CD8-positive, alpha-beta T cell (primary cell): ENCODE measurements at regions of chr9 and their contacts with region 1.

Region 1: GRCh38 chr9:33721674-33722358 is 73.5 kb upstream of the PRSS3 start:
- DNase-seq: peak; percentile 75 to 94 (median 87)
- ATAC-seq: peak; percentile 87
- H3K4me3 ChIP-seq: no peak overlapping the region
- H3K4me3 Mint-ChIP-seq: no peak overlapping the region
- H3K27ac ChIP-seq: no peak overlapping the region
- H3K27ac Mint-ChIP-seq: no peak overlapping the region
- H3K4me1 ChIP-seq: no peaks in the 10 kb centered on the region
- H3K4me1 Mint-ChIP-seq: no peaks in the 10 kb centered on the region
- H3K27me3 ChIP-seq: no peaks in the 10 kb centered on the region
- H3K27me3 Mint-ChIP-seq: peaks cover 15% of the 10 kb centered on the region
- CTCF ChIP-seq: peak; percentile 100

Region 2: GRCh38 chr9:33524306-33524947 is 197.4 kb before region 1 on chr9:
- CTCF ChIA-PET with region 1: no interaction called
- POLR2A ChIA-PET with region 1: no interaction called
- intact Hi-C with region 1: no loop called
- DNase-seq: peak in 3 of 9 experiments; percentile 5 to 15 (median 8)
- ATAC-seq: no peak
- H3K4me3 ChIP-seq: peak overlapping the region; percentile 31 to 48
- H3K4me3 Mint-ChIP-seq: peak overlapping the region; percentile 80
- H3K27ac ChIP-seq: no peak overlapping the region
- H3K27ac Mint-ChIP-seq: no peak overlapping the region
- H3K4me1 ChIP-seq: peaks cover 5% of the 10 kb centered on the region
- H3K4me1 Mint-ChIP-seq: peaks cover 10% of the 10 kb centered on the region
- H3K27me3 ChIP-seq: peaks cover 8 to 11% of the 10 kb centered on the region in 2 experiments
- H3K27me3 Mint-ChIP-seq: peaks cover 53% of the 10 kb centered on the region
- CTCF ChIP-seq: no peak

Region 3: GRCh38 chr9:33633636-33634035 is 88.2 kb before region 1 on chr9:
- CTCF ChIA-PET with region 1: interaction called, 209 read pairs
- POLR2A ChIA-PET with region 1: no interaction called
- intact Hi-C with region 1: no loop called
- DNase-seq: no peak
- ATAC-seq: no peak
- H3K4me3 ChIP-seq: no peak overlapping the region
- H3K4me3 Mint-ChIP-seq: no peak overlapping the region
- H3K27ac ChIP-seq: no peak overlapping the region
- H3K27ac Mint-ChIP-seq: no peak overlapping the region
- H3K4me1 ChIP-seq: no peaks in the 10 kb centered on the region
- H3K4me1 Mint-ChIP-seq: peaks cover 3% of the 10 kb centered on the region
- H3K27me3 ChIP-seq: peaks cover 0 to 15% of the 10 kb centered on the region in 2 experiments
- H3K27me3 Mint-ChIP-seq: peaks cover 57% of the 10 kb centered on the region
- CTCF ChIP-seq: no peak

Region 4: DNA sequence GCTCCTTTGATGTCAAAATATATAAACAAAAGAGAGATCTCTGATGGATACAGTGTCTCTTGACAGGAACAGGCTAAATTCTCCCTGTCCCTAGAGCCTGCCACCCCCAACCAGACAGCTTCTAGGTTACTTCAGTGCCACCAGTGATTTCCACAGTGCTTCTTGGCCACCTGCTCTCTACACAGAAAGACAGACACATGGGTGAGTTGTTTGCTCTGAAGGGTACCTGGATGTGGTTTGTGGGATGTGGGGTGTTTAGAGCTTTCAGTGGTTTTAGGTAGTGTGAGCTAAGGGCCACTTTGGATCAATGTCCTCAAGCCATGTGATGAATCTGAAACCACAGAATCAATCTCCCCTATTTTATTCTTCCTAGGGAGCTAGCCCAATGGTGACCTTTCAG is 72.4 kb before region 1 on chr9:
- CTCF ChIA-PET with region 1: interaction called, 11 read pairs
- POLR2A ChIA-PET with region 1: no interaction called
- intact Hi-C with region 1: no loop called
- DNase-seq: peak in 2 of 9 experiments; percentile 13 to 39
- ATAC-seq: peak; percentile 44
- H3K4me3 ChIP-seq: no peak overlapping the region
- H3K4me3 Mint-ChIP-seq: no peak overlapping the region
- H3K27ac ChIP-seq: no peak overlapping the region
- H3K27ac Mint-ChIP-seq: no peak overlapping the region
- H3K4me1 ChIP-seq: peaks cover 6% of the 10 kb centered on the region
- H3K4me1 Mint-ChIP-seq: peaks cover 14% of the 10 kb centered on the region
- H3K27me3 ChIP-seq: no peaks in the 10 kb centered on the region
- H3K27me3 Mint-ChIP-seq: peaks cover 35% of the 10 kb centered on the region
- CTCF ChIP-seq: no peak

Region 5: DNA sequence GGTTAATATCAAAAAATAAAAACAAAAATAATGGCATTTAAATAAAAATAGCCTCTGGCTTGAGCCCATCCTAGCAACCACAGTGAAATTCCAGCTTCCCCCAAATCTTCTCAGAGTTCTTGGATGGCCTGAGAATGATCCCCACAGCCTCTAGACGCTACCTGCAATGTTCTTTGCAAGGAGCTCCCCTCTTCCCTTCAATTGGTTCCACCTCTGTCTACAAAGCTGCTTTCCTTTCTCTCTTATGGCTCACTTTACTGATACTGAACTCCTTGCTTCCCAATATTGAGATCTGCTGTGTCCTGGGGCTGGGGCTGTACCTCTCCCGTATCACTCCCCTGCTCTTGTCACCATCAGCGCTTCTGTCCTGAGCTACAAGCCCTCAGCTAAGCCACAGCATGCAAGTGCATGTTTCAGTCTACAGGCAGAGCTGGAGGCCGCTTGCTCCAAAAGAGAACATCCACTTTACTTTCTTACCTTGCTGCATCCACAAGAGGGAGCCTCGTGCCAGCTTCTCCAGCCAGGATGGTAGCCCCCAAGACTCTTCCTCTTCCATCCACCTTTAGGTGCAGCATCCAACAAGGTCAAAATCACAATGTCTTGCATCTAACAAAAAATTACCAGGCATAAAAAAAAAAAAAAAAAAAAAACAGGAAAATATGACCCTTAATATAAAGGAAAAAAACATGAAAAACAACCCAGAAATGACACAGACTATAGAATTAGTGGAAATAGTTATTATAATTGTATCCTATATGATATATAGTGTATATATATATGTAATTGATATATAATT is 16.2 kb after region 1 on chr9:
- CTCF ChIA-PET with region 1: interaction called, 13 read pairs
- POLR2A ChIA-PET with region 1: no interaction called
- intact Hi-C with region 1: no loop called
- DNase-seq: peak in 2 of 9 experiments; percentile 42 to 61
- ATAC-seq: peak; percentile 42
- H3K4me3 ChIP-seq: no peak overlapping the region
- H3K4me3 Mint-ChIP-seq: no peak overlapping the region
- H3K27ac ChIP-seq: no peak overlapping the region
- H3K27ac Mint-ChIP-seq: no peak overlapping the region
- H3K4me1 ChIP-seq: no peaks in the 10 kb centered on the region
- H3K4me1 Mint-ChIP-seq: no peaks in the 10 kb centered on the region
- H3K27me3 ChIP-seq: no peaks in the 10 kb centered on the region
- H3K27me3 Mint-ChIP-seq: peaks cover 14% of the 10 kb centered on the region
- CTCF ChIP-seq: peak; percentile 33